Mammary epithelial cell (primary cell): ENCODE measurements at regions of chr5 and their contacts with region 1.

Region 1: GRCh38 chr5:172886974-172887501 is 53.0 kb downstream of the ERGIC1 start:
- DNase-seq: peak; percentile 86
- H3K4me3 ChIP-seq: no peak overlapping the region
- H3K27ac ChIP-seq: peak overlapping the region; percentile 46
- H3K4me1 ChIP-seq: peaks cover 13% of the 10 kb centered on the region
- H3K27me3 ChIP-seq: no peaks in the 10 kb centered on the region
- CTCF ChIP-seq: no peak

Region 2: DNA sequence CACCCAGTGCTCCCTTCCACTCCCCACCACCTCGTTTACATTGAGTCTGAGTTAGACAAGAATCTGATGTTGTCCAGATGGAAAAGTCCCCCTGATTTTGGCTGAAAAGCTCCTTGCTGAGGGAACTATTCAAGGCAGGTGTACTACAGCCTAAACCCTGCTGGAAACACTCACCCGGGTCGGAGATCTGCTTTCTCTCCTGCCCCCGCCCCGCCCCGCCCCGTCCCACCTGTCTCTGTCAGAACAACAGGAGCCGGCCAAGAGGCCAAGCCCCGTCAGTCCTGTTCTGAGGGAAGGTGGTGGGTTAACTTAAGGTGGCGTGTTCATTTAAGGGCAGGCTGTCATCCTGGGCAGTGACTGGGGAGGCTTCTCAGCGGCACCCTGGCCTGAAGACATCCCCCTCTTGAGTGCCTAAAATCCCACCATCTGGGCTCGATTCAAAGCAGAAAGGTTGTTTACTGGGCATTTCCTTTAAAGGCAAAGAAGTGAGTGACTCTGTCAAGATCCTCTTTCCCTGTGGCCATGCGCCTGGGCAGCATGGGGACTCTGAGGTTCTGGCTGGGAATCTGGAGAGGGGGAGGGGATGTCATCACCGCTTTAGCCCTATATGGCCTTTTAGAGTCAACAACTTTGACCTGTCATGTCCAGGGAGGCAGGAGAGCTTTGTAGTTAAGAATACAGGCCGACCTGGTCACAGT is 317.0 kb before region 1 on chr5:
- CTCF ChIA-PET with region 1: no interaction called
- dilution Hi-C with region 1: no loop called
- in situ Hi-C with region 1: no loop called
- intact Hi-C with region 1: no loop called
- DNase-seq: no peak
- H3K4me3 ChIP-seq: no peak overlapping the region
- H3K27ac ChIP-seq: no peak overlapping the region
- H3K4me1 ChIP-seq: no peaks in the 10 kb centered on the region
- H3K27me3 ChIP-seq: no peaks in the 10 kb centered on the region
- CTCF ChIP-seq: no peak

Region 3: DNA sequence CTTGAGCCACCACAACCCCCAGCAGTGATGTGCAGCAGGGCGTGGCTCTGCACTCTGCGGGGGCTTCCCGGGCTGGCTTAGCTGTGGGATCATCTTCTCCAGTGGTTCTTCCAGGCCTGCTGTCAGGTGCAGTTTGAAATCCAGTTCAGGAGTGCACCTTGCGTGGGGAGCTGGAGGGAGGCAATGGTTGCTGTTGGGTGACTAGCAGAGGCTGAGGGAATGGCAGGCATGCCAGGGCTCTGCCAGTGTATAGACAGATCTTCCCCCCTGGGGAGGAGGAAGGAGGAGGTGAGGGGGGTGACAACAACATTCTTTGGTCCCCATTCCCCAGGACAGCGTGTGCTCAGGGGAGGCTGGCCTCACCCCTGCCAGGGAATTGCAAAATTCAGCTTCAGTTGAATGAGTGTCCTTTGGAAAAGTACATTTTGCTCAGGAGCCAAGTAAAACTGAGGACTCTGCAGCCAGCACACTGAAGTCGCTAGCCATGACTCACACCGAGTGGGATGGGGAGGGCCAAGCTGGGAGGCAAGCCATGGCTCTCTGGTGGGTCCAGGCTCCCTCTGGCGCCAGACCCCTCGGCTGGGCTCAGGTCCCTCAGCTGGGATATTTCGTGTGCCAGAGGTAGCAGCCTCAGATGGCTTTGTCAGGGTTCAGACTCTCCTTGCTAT is 18.0 kb before region 1 on chr5:
- CTCF ChIA-PET with region 1: no interaction called
- dilution Hi-C with region 1: no loop called
- in situ Hi-C with region 1: no loop called
- intact Hi-C with region 1: loop called (anchors 2 kb)
- DNase-seq: peak; percentile 76
- H3K4me3 ChIP-seq: no peak overlapping the region
- H3K27ac ChIP-seq: peak overlapping the region; percentile 86
- H3K4me1 ChIP-seq: peaks cover 58% of the 10 kb centered on the region
- H3K27me3 ChIP-seq: no peaks in the 10 kb centered on the region
- CTCF ChIP-seq: peak in 1 of 2 donors; percentile 35